ENCODE measurements at regions of chr14 and their contacts with region 1.

Region 1: DNA sequence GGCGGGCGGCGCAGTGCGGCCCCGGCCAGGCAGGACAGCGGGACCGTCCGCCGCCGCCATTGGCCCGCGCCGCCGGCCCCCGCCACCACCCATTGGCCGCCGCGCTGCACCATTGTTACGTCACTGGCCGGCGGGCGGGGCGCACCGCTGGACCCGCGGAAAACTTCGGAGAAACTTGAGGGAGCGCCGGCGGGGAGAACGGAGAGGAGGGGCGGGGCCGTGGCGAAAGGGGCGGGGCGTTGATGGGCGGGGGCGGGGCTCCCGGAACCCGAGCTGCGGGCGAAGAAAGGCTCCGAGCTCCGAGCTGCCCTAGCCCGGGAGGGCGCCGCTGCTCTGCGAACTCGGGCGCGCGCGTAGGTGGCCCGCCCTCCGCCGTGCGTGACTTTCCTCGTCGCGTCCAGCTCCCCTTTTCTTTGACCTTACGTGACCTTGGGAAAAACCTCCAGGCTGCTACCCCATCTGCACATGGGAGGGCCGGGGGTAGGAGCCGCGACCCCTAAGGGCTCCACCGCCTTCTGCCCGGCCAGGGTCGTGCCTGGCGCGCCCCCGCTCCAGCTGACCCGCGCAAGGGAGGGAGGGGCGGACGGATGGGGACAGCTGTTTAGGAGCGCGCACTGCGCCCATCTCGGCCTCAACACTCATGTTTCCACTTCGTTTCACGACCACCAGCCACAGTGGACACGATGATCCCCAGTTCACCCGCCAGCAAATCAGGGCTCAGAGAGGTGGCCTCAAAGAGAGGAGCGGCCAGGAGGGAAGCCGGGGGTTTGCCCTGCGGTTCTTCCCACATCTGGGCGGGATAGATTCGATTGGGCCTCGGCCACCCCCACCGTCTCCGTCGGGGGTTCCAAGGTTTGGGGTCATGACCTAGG is at the start of gene ANKRD9:
- DNase-seq: peak; percentile 97
- total RNA-seq, gene ANKRD9: 137 TPM

Region 2: DNA sequence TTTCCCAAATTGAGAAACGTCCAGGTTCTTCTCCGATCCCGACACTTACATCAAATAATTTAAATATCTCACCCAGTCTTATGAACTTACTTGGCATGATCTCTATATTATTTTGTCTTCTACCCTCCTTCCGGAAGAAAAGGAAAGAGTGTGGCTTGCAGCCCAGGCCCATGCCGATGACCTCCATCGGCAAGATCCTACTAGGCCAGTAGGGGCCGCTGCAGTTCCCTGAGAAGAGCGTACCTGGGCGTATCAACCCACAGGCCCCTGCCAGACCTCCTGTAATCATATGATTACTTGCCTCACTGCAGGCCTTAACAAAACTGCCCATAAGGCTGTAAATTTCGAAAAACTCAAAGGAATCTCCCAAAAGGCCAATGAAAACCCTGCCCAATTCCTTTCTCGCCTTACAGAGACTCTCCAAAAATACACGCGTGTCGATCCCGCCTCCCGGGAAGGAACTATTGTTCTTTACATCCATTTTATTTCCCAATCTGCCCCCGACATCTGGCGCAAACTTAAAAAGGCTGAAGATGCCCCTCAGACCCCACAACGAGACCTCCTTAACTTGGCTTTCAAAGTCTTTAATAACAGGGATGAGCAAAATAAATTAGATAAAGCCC is 274.6 kb before region 1 on chr14:
- intact Hi-C with region 1: loop called (anchors 10 kb)
- DNase-seq: peak; percentile 90